ENCODE measurements at regions of chr17 and their contacts with region 1.

Region 1: GRCh38 chr17:43170766-43171585 is at the start of gene NBR1:
- DNase-seq: peak; percentile 95 to 99 (median 97)
- H3K4me3 ChIP-seq: peak within 1 kb of the TSS; percentile 51 to 82 (median 73)
- H3K27ac ChIP-seq: peak within 1 kb of the TSS; percentile 78 to 98 (median 97)
- H3K4me1 ChIP-seq: peaks cover 25 to 52% of the 10 kb centered on the region in 2 donors
- H3K27me3 ChIP-seq: no peaks in the 10 kb centered on the region
- CTCF ChIP-seq: no peak
- POLR2A ChIP-seq: peak; percentile 63 to 94
- total RNA-seq, gene NBR1: 63.6 to 139 (median 110) TPM

Region 2: GRCh38 chr17:43079578-43080302 is 91.2 kb before region 1 on chr17:
- intact Hi-C with region 1: no loop called
- DNase-seq: no peak
- H3K4me3 ChIP-seq: no peak overlapping the region
- H3K27ac ChIP-seq: no peak overlapping the region
- H3K4me1 ChIP-seq: peaks cover 0 to 6% of the 10 kb centered on the region in 2 donors
- H3K27me3 ChIP-seq: no peaks in the 10 kb centered on the region
- CTCF ChIP-seq: no peak
- POLR2A ChIP-seq: no peak

Region 3: DNA sequence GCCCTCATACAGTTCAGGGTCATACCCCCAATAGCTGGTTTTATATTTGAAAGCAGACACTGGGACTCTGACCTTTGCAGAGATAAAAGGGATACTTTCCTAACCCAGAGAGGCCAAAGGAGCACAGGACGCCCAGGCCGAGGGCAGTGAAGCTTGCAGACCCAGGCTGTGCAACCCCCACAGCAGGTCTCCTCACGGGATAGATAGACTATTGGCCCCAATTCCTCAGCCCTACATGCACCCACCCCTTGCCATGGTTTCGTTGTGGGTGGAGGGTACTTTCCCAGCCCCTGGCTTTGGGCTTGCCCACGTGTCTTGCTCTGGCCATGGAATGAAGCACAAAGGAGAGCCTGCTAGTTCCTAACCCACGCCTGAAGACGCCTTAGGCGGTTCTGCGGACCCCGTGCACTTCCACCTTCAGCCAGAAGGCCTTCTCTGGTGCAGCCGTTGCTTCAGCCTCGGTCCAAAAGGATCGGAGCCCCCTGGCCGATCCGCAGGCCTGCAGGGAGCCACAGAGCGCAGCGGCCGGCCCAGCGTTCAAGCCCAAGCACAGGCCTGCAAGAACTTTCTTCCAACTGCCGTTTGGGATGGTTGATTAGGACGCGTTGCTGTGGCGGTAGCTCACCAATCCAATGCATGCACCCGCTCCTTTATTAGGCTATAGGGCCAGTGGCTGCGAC is 36.1 kb before region 1 on chr17:
- intact Hi-C with region 1: loop called in 1 of 2 experiments (anchors 5 kb)
- DNase-seq: peak in 2 of 7 donors; percentile 5 to 39
- H3K4me3 ChIP-seq: no peak overlapping the region
- H3K27ac ChIP-seq: no peak overlapping the region
- H3K4me1 ChIP-seq: no peaks in the 10 kb centered on the region
- H3K27me3 ChIP-seq: no peaks in the 10 kb centered on the region
- CTCF ChIP-seq: no peak
- POLR2A ChIP-seq: no peak